ENCODE measurements at regions of chr7 and their contacts with region 1.

Region 1: DNA sequence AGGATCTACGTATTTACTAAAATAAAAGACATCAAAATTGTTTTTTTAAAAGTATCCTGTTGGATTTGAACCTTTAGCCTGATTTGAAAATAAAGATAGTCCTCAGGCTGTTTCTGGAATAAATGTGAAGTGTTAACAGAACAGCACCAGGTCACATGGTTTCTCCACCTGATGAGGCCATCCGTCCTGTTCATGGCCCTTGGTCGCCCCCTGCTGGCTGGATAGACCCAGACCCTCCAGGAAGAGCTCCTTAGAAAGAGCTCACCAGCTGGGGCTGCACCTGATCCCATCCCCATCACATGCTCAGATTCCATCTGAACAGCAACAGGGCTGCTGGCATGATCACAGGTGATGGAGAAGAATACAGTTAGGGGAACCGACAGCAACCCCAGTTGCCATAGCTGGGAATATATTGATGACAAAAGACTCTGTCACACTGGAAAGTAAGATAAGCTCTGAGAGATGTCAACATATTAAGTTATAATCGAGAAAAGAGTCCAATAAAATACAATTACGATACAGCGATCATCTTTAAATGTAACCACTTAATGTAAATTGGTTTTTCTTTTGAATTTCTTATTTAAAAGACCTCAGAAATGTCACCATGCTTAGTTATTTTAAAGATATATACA is 4.8 kb downstream of the OR2A14 start:
- DNase-seq: peak; percentile 67
- ATAC-seq: peak; percentile 92
- H3K4me3 ChIP-seq: no peak overlapping the region
- H3K27ac ChIP-seq: no peak overlapping the region
- H3K4me1 ChIP-seq: no peaks in the 10 kb centered on the region
- H3K27me3 ChIP-seq: no peaks in the 10 kb centered on the region
- CTCF ChIP-seq: peak; percentile 77
- POLR2A ChIP-seq: no peak
- RAD21 ChIP-seq: peak; percentile 75

Region 2: DNA sequence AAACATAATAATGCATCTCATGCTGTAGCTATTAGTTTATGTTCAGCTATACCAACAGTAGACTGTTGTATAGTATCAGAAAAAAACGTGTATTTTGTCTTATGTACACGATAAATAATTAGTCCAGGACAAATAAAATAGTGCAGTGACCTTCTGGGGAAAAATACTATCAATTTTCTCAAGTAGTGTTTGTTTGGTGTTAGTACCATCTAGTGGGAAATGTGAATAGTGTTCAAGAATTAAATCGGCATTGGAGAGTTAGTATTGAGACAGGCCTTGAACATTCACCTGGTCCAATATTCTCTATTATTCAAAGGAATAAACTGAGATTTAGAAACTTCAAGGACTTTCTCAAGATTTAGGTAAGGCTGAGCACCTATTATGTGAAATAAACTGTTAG is 100.7 kb before region 1 on chr7:
- CTCF ChIA-PET with region 1: no interaction called
- POLR2A ChIA-PET with region 1: no interaction called
- dilution Hi-C with region 1: no loop called
- in situ Hi-C with region 1: no loop called
- intact Hi-C with region 1: loop called (anchors 5 kb)
- DNase-seq: peak; percentile 50
- ATAC-seq: peak; percentile 84
- H3K4me3 ChIP-seq: no peak overlapping the region
- H3K27ac ChIP-seq: no peak overlapping the region
- H3K4me1 ChIP-seq: no peaks in the 10 kb centered on the region
- H3K27me3 ChIP-seq: peaks cover 2% of the 10 kb centered on the region
- CTCF ChIP-seq: peak; percentile 70
- POLR2A ChIP-seq: no peak
- RAD21 ChIP-seq: peak; percentile 77

Measured in IMR-90 (cell line).